PC-3 (cell line): ENCODE measurements at regions of chr10 and their contacts with region 1.

Region 1: DNA sequence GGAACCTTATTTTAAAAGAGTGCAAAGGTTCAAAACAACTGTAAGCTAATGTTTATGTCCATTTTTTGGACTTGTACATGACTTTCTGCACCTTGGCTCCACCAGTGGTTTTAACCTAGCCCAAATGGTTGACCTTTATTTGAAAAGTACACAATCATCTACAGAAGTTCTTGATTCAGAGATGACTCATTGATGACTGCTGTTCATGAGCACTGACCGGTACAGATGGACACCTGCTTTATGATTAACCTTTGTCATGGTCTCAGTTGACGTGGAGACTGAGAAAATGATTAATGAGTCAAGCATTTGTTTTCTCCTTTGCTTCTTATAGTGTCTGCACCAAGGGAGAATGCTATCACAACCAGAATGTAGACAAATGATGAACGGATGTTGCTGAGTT is 55.7 kb upstream of the PTER start:
- DNase-seq: peak; percentile 76
- ATAC-seq: peak; percentile 92
- H3K4me3 ChIP-seq: no peak overlapping the region
- H3K27ac ChIP-seq: peak overlapping the region; percentile 59
- H3K4me1 ChIP-seq: peaks cover 8% of the 10 kb centered on the region; the same call in 1 of the 2 replicates
- H3K27me3 ChIP-seq: no peaks in the 10 kb centered on the region
- CTCF ChIP-seq: no peak

Region 2: GRCh38 chr10:16436758-16437539 is 55.9 kb after region 1 on chr10 and contains the start of gene PTER:
- CTCF ChIA-PET with region 1: no interaction called
- POLR2A ChIA-PET with region 1: interaction called, 3 read pairs
- intact Hi-C with region 1: loop called (anchors 2 kb)
- DNase-seq: peak; percentile 85
- ATAC-seq: peak; percentile 92
- H3K4me3 ChIP-seq: peak within 1 kb of the TSS; percentile 70
- H3K27ac ChIP-seq: peak within 1 kb of the TSS; percentile 34; the same call in 1 of the 2 replicates
- H3K4me1 ChIP-seq: peaks cover 28% of the 10 kb centered on the region; the same call in 1 of the 2 replicates
- H3K27me3 ChIP-seq: no peaks in the 10 kb centered on the region
- CTCF ChIP-seq: no peak
- total RNA-seq, gene PTER: 6.6 and 9.3 TPM in 2 replicates